IMR-90 (cell line): ENCODE measurements at regions of chr1 and their contacts with region 1.

Region 1: GRCh38 chr1:187264995-187265602 is 436.4 kb downstream of the PLA2G4A start:
- DNase-seq: peak; percentile 73
- ATAC-seq: peak; percentile 88
- H3K4me3 ChIP-seq: no peak overlapping the region
- H3K27ac ChIP-seq: no peak overlapping the region
- H3K4me1 ChIP-seq: no peaks in the 10 kb centered on the region
- H3K27me3 ChIP-seq: no peaks in the 10 kb centered on the region
- CTCF ChIP-seq: peak; percentile 71
- POLR2A ChIP-seq: no peak
- RAD21 ChIP-seq: peak; percentile 84

Region 2: DNA sequence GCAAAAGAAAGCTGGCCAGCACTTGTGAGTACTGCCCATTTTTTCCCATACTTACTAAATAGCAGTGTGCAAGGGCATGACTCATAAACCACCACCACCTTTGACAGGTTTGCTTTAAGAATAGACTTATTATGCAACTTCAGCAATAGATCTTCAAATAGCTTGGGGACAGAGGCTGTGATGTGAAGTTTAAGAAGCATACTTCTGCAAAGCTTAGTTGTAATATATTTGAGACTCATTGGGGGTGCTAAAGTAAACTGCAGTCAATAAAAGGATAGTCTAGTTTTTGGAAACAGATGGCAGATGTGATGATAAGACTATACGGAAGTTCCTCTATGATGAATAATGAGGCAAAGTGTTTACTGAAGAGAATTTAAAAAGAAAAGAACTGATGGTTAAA is 226.3 kb before region 1 on chr1:
- CTCF ChIA-PET with region 1: no interaction called
- POLR2A ChIA-PET with region 1: no interaction called
- dilution Hi-C with region 1: no loop called
- in situ Hi-C with region 1: no loop called
- intact Hi-C with region 1: no loop called
- DNase-seq: peak; percentile 61
- ATAC-seq: peak; percentile 27; the same call in 1 of the 2 replicates
- H3K4me3 ChIP-seq: no peak overlapping the region
- H3K27ac ChIP-seq: no peak overlapping the region
- H3K4me1 ChIP-seq: no peaks in the 10 kb centered on the region
- H3K27me3 ChIP-seq: no peaks in the 10 kb centered on the region
- CTCF ChIP-seq: no peak
- POLR2A ChIP-seq: no peak
- RAD21 ChIP-seq: no peak

Region 3: GRCh38 chr1:187051618-187052232 is 213.4 kb before region 1 on chr1:
- CTCF ChIA-PET with region 1: no interaction called
- POLR2A ChIA-PET with region 1: no interaction called
- dilution Hi-C with region 1: no loop called
- in situ Hi-C with region 1: no loop called
- intact Hi-C with region 1: loop called (anchors 2 kb)
- DNase-seq: peak; percentile 58
- ATAC-seq: no peak
- H3K4me3 ChIP-seq: no peak overlapping the region
- H3K27ac ChIP-seq: no peak overlapping the region
- H3K4me1 ChIP-seq: no peaks in the 10 kb centered on the region
- H3K27me3 ChIP-seq: peaks cover 1% of the 10 kb centered on the region; the same call in 1 of the 2 replicates
- CTCF ChIP-seq: peak; percentile 54
- POLR2A ChIP-seq: no peak
- RAD21 ChIP-seq: peak; percentile 67

Region 4: DNA sequence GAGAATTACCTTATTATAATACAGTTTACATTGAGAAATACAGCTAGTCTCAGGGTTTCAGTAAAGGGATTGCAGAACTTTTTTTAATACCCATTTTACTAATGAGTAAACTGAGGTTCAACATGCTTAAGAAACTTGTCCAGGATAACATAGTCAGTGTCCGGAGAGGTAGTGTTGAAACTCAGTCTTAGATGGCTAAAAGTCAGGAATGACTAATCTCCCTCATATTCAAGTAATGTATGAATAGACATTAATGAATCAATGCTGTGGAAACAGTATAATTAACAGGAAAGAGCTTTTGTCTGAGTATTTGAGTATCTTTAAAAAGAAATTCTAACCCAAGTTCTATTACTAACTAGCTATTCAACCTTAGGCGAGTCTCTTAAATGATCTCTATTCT is 38.7 kb before region 1 on chr1:
- CTCF ChIA-PET with region 1: no interaction called
- POLR2A ChIA-PET with region 1: no interaction called
- dilution Hi-C with region 1: no loop called
- in situ Hi-C with region 1: no loop called
- intact Hi-C with region 1: no loop called
- DNase-seq: peak; percentile 41
- ATAC-seq: no peak
- H3K4me3 ChIP-seq: no peak overlapping the region
- H3K27ac ChIP-seq: no peak overlapping the region
- H3K4me1 ChIP-seq: no peaks in the 10 kb centered on the region
- H3K27me3 ChIP-seq: no peaks in the 10 kb centered on the region
- CTCF ChIP-seq: no peak
- POLR2A ChIP-seq: no peak
- RAD21 ChIP-seq: no peak

Region 5: GRCh38 chr1:187408212-187409003 is 143.3 kb after region 1 on chr1:
- CTCF ChIA-PET with region 1: interaction called, 3 read pairs
- POLR2A ChIA-PET with region 1: no interaction called
- dilution Hi-C with region 1: no loop called
- in situ Hi-C with region 1: no loop called
- intact Hi-C with region 1: loop called (anchors 5 kb)
- DNase-seq: peak; percentile 37
- ATAC-seq: peak; percentile 54
- H3K4me3 ChIP-seq: no peak overlapping the region
- H3K27ac ChIP-seq: peak overlapping the region; percentile 45; the same call in 1 of the 2 replicates
- H3K4me1 ChIP-seq: peaks cover 8% of the 10 kb centered on the region
- H3K27me3 ChIP-seq: no peaks in the 10 kb centered on the region
- CTCF ChIP-seq: no peak
- POLR2A ChIP-seq: no peak
- RAD21 ChIP-seq: no peak

Region 6: DNA sequence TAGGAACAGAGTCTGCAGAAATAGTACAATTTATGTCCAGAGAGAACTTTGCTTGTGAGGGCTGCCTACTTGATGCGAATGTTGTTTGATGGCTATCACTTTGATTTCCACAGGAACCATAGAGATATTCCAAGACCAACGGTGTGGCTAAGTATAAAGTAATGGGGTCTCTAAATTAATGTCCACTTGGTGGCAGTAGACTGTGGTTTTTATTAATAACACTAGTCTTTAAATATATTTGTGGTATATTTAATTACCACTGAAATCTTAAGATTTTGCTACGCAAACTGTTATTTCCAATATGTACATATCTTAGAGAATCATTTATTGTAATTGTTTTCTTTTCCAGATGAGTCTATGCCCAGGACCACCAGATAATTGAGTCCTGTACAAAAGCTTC is 211.6 kb after region 1 on chr1:
- CTCF ChIA-PET with region 1: no interaction called
- POLR2A ChIA-PET with region 1: no interaction called
- dilution Hi-C with region 1: no loop called
- in situ Hi-C with region 1: no loop called
- intact Hi-C with region 1: loop called (anchors 5 kb)
- DNase-seq: peak; percentile 20
- ATAC-seq: 0 out of 2 replicates have a peak, but pooled peaks have one; percentile 53
- H3K4me3 ChIP-seq: no peak overlapping the region
- H3K27ac ChIP-seq: no peak overlapping the region
- H3K4me1 ChIP-seq: peaks cover 2% of the 10 kb centered on the region; the same call in 1 of the 2 replicates
- H3K27me3 ChIP-seq: no peaks in the 10 kb centered on the region
- CTCF ChIP-seq: peak; percentile 49
- POLR2A ChIP-seq: no peak
- RAD21 ChIP-seq: peak; percentile 43

Region 7: DNA sequence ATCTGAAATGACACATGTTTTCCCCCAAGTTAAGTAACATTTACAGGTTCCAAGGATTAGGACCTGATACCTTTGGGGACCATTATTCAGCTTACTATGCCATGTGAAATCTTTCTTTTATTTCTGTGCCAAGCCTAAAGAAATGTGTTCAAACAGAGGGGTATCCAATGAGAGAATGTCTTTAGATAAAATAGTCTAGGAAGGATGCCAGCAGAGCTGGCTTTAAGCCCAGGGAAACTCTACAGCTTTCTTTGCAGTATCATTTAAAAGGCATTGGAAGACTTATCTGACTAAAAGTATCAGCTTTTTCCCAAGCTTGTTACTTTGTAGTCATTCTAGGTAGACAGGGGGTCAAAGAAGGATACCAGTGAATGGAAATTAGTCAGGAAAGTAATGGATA is 424.0 kb after region 1 on chr1:
- CTCF ChIA-PET with region 1: no interaction called
- POLR2A ChIA-PET with region 1: no interaction called
- dilution Hi-C with region 1: no loop called
- in situ Hi-C with region 1: no loop called
- intact Hi-C with region 1: loop called (anchors 10 kb)
- DNase-seq: peak; percentile 90
- ATAC-seq: peak; percentile 45
- H3K4me3 ChIP-seq: no peak overlapping the region
- H3K27ac ChIP-seq: no peak overlapping the region
- H3K4me1 ChIP-seq: peaks cover 2% of the 10 kb centered on the region; the same call in 1 of the 2 replicates
- H3K27me3 ChIP-seq: no peaks in the 10 kb centered on the region
- CTCF ChIP-seq: no peak
- POLR2A ChIP-seq: no peak
- RAD21 ChIP-seq: no peak

Region 8: DNA sequence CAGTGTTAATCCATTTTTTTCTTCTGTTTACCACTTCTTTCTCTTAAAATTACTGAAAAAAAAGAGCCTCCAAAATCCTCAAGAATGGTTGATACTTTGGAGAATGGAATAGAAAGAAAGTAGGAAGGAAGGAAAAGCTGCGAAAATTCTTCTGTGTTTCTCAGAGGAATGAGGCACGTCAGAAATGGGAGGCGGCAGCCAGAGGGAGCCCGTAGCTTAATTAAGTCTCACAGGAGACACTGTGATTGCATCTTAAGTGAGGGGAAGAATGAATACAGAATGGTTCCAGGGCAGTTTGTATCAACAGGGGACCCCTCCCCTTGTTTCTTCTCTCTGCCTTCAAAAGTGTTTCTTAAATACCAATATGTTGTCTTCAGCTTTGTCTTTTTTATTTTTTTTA is 663.2 kb after region 1 on chr1:
- CTCF ChIA-PET with region 1: no interaction called
- POLR2A ChIA-PET with region 1: no interaction called
- dilution Hi-C with region 1: no loop called
- in situ Hi-C with region 1: no loop called
- intact Hi-C with region 1: loop called (anchors 2 kb)
- DNase-seq: peak; percentile 36
- ATAC-seq: peak; percentile 57
- H3K4me3 ChIP-seq: no peak overlapping the region
- H3K27ac ChIP-seq: no peak overlapping the region
- H3K4me1 ChIP-seq: no peaks in the 10 kb centered on the region
- H3K27me3 ChIP-seq: no peaks in the 10 kb centered on the region
- CTCF ChIP-seq: peak; percentile 64
- POLR2A ChIP-seq: no peak
- RAD21 ChIP-seq: peak; percentile 71

Region 9: GRCh38 chr1:188128761-188129160 is 863.7 kb after region 1 on chr1:
- CTCF ChIA-PET with region 1: no interaction called
- POLR2A ChIA-PET with region 1: no interaction called
- dilution Hi-C with region 1: no loop called
- in situ Hi-C with region 1: no loop called
- intact Hi-C with region 1: loop called (anchors 1 kb)
- DNase-seq: peak; percentile 41
- ATAC-seq: peak; percentile 85
- H3K4me3 ChIP-seq: no peak overlapping the region
- H3K27ac ChIP-seq: no peak overlapping the region
- H3K4me1 ChIP-seq: no peaks in the 10 kb centered on the region
- H3K27me3 ChIP-seq: no peaks in the 10 kb centered on the region
- CTCF ChIP-seq: peak; percentile 46
- POLR2A ChIP-seq: no peak
- RAD21 ChIP-seq: peak; percentile 51